ENCODE measurements at regions of chr1 and their contacts with region 1.

Region 1: GRCh38 chr1:227999056-227999930 is 7.5 kb upstream of the WNT3A start:
- DNase-seq: peak; percentile 97
- ATAC-seq: peak; percentile 96
- H3K4me3 ChIP-seq: no peak overlapping the region
- H3K27ac ChIP-seq: no peak overlapping the region
- H3K4me1 ChIP-seq: no peaks in the 10 kb centered on the region
- H3K27me3 ChIP-seq: no peaks in the 10 kb centered on the region
- CTCF ChIP-seq: peak; percentile 100

Region 2: GRCh38 chr1:226662642-226663326 is 1336.5 kb before region 1 on chr1:
- CTCF ChIA-PET with region 1: no interaction called
- POLR2A ChIA-PET with region 1: no interaction called
- intact Hi-C with region 1: no loop called
- DNase-seq: peak; percentile 90
- ATAC-seq: peak; percentile 94
- H3K4me3 ChIP-seq: peak overlapping the region; percentile 35; the same call in 1 of the 2 replicates
- H3K27ac ChIP-seq: peak overlapping the region; percentile 27
- H3K4me1 ChIP-seq: peaks cover 35% of the 10 kb centered on the region
- H3K27me3 ChIP-seq: no peaks in the 10 kb centered on the region
- CTCF ChIP-seq: no peak

Region 3: GRCh38 chr1:228043281-228043890 is 44.1 kb after region 1 on chr1:
- CTCF ChIA-PET with region 1: interaction called, 7 read pairs
- POLR2A ChIA-PET with region 1: no interaction called
- intact Hi-C with region 1: loop called (anchors 2 kb)
- DNase-seq: peak; percentile 100
- ATAC-seq: peak; percentile 91
- H3K4me3 ChIP-seq: peak overlapping the region; percentile 8; the same call in 1 of the 2 replicates
- H3K27ac ChIP-seq: peak overlapping the region; percentile 52
- H3K4me1 ChIP-seq: peaks cover 41% of the 10 kb centered on the region
- H3K27me3 ChIP-seq: peaks cover 4% of the 10 kb centered on the region; the same call in 1 of the 2 replicates
- CTCF ChIP-seq: no peak

Region 4: DNA sequence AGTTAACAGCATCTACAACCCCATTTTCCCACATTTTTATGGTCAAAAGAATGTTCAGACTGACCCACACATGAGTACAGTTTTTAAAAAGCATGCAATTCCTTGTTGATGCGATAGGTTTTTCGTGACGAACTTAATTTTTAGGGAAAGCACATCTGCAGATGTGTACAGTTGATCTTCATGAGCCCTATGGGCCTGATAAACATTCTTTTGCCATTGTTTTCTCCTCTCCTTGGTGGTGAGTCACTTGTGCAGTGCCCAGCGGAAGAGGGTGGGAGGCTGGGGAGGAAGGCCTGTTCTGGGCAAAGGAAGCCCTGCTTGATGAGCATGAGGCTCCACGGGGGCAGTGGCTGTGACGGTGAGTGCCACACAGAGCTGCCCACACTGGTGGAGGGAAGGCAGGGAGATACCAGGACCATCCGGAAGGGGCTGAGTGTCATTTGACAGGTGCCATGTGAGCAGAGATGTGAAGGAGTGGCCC is 88.5 kb after region 1 on chr1:
- CTCF ChIA-PET with region 1: interaction called, 8 read pairs
- POLR2A ChIA-PET with region 1: no interaction called
- intact Hi-C with region 1: loop called (anchors 1 kb)
- DNase-seq: peak; percentile 96
- ATAC-seq: peak; percentile 82
- H3K4me3 ChIP-seq: peak overlapping the region; percentile 16; the same call in 1 of the 2 replicates
- H3K27ac ChIP-seq: peak overlapping the region; percentile 14
- H3K4me1 ChIP-seq: peaks cover 74% of the 10 kb centered on the region
- H3K27me3 ChIP-seq: no peaks in the 10 kb centered on the region
- CTCF ChIP-seq: peak; percentile 39

Region 5: DNA sequence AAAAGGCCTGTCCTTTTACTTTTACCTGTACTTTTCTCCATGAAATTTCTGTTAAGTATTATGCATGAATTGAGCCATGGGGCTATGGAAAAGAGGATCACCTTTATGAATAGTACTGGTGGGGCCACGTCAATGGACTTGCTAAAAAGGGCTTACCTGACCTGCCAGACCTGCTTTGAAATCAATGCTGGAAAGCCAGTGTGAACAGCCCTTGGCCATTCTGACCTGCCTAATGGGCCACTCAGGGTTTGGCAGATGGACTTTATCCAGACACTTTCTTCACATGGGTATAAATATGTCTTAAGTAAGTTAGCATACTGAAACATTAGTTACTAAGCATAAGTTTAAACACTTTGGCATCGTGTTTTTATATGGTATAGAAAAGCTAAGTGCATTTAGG is 132.5 kb after region 1 on chr1:
- CTCF ChIA-PET with region 1: interaction called, 29 read pairs
- POLR2A ChIA-PET with region 1: no interaction called
- intact Hi-C with region 1: loop called (anchors 1 kb)
- DNase-seq: peak; percentile 58
- ATAC-seq: no peak
- H3K4me3 ChIP-seq: peak overlapping the region; percentile 65
- H3K27ac ChIP-seq: peak overlapping the region; percentile 54
- H3K4me1 ChIP-seq: peaks cover 12% of the 10 kb centered on the region
- H3K27me3 ChIP-seq: no peaks in the 10 kb centered on the region
- CTCF ChIP-seq: no peak

Region 6: GRCh38 chr1:228190778-228191177 is 191.5 kb after region 1 on chr1:
- CTCF ChIA-PET with region 1: interaction called, 3 read pairs
- POLR2A ChIA-PET with region 1: no interaction called
- intact Hi-C with region 1: loop called (anchors 1 kb)
- DNase-seq: no peak
- ATAC-seq: no peak
- H3K4me3 ChIP-seq: no peak overlapping the region
- H3K27ac ChIP-seq: no peak overlapping the region
- H3K4me1 ChIP-seq: peaks cover 8% of the 10 kb centered on the region; the same call in 1 of the 2 replicates
- H3K27me3 ChIP-seq: no peaks in the 10 kb centered on the region
- CTCF ChIP-seq: no peak